ENCODE measurements at regions of chr4 and their contacts with region 1.

Region 1: DNA sequence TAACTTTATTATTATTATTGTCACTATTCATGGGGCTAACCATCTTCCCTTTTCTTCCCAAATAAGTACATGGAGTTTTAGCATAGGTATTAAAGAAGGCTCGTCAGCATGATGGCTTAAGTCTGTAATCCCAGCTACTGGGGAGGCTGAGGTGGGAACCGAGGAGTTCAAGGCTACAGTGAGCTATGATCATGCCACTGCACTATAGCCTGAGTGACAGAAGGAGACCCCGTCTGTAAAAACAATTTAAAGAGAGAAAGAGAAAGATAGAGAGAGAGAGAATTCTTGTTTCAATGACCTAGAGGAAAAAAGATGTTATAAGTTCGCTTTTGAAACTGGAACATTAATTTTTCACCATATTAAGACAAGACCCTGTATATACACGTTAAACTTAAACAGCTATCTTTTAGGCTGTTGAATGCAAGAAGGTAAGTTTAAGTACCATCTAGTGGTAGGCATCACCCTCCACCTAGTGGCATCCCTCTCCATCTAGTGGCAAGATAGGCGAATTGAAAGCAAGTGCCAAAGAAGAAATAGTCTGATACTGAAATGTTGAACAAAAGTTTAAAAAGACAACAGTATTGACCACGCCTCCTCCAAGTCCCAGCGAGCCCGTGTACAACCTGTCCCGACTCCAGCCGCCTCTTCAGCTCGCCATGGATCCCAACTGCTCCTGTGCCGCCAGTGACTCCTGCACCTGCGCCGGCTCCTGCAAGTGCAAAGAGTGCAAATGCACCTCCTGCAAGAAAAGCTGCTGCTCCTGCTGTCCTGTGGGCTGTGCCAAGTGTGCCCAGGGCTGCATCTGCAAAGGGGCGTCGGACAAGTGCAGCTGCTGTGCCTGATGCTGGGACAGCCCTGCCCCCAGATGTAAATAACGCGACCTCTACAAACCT is 26.0 kb upstream of the YTHDC1 start:
- DNase-seq: peak; percentile 39
- ATAC-seq: peak; percentile 69
- H3K4me3 Mint-ChIP-seq: peak overlapping the region; percentile 71
- H3K27ac Mint-ChIP-seq: peak overlapping the region; percentile 63
- H3K4me1 Mint-ChIP-seq: peaks cover 74% of the 10 kb centered on the region
- H3K27me3 Mint-ChIP-seq: peaks cover 7% of the 10 kb centered on the region
- CTCF ChIP-seq: peak; percentile 34; the same call in 1 of the 2 replicates

Region 2: GRCh38 chr4:68271851-68272756 is 103.8 kb before region 1 on chr4:
- CTCF ChIA-PET with region 1: interaction called, 28 read pairs
- POLR2A ChIA-PET with region 1: no interaction called
- DNase-seq: peak; percentile 32
- ATAC-seq: peak; percentile 82
- H3K4me3 Mint-ChIP-seq: peak overlapping the region; percentile 68
- H3K27ac Mint-ChIP-seq: peak overlapping the region; percentile 97
- H3K4me1 Mint-ChIP-seq: peaks cover 35% of the 10 kb centered on the region
- H3K27me3 Mint-ChIP-seq: 0 out of 2 replicates have a peak, but pooled peaks cover 6% of the 10 kb centered on the region
- CTCF ChIP-seq: peak; percentile 63

Region 3: GRCh38 chr4:68288393-68288740 is 87.5 kb before region 1 on chr4:
- CTCF ChIA-PET with region 1: interaction called, 10 read pairs
- POLR2A ChIA-PET with region 1: no interaction called
- DNase-seq: no peak
- ATAC-seq: peak; percentile 63; the same call in 1 of the 2 replicates
- H3K4me3 Mint-ChIP-seq: no peak overlapping the region
- H3K27ac Mint-ChIP-seq: no peak overlapping the region
- H3K4me1 Mint-ChIP-seq: peaks cover 21% of the 10 kb centered on the region
- H3K27me3 Mint-ChIP-seq: no peaks in the 10 kb centered on the region
- CTCF ChIP-seq: no peak

Region 4: GRCh38 chr4:68342134-68342533 is 33.8 kb before region 1 on chr4:
- CTCF ChIA-PET with region 1: interaction called, 15 read pairs
- POLR2A ChIA-PET with region 1: no interaction called
- DNase-seq: no peak
- ATAC-seq: peak; percentile 43
- H3K4me3 Mint-ChIP-seq: peak overlapping the region; percentile 8
- H3K27ac Mint-ChIP-seq: peak overlapping the region; percentile 8
- H3K4me1 Mint-ChIP-seq: peaks cover 62% of the 10 kb centered on the region
- H3K27me3 Mint-ChIP-seq: no peaks in the 10 kb centered on the region
- CTCF ChIP-seq: no peak

Region 5: GRCh38 chr4:68388347-68388865 is 12.5 kb after region 1 on chr4:
- CTCF ChIA-PET with region 1: interaction called, 10 read pairs
- POLR2A ChIA-PET with region 1: no interaction called
- DNase-seq: no peak
- ATAC-seq: no peak
- H3K4me3 Mint-ChIP-seq: no peak overlapping the region
- H3K27ac Mint-ChIP-seq: peak overlapping the region; percentile 93
- H3K4me1 Mint-ChIP-seq: peaks cover 55% of the 10 kb centered on the region
- H3K27me3 Mint-ChIP-seq: no peaks in the 10 kb centered on the region
- CTCF ChIP-seq: no peak

Region 6: GRCh38 chr4:68410149-68410548 is 34.2 kb after region 1 on chr4:
- CTCF ChIA-PET with region 1: interaction called, 10 read pairs
- POLR2A ChIA-PET with region 1: no interaction called
- DNase-seq: no peak
- ATAC-seq: no peak
- H3K4me3 Mint-ChIP-seq: peak overlapping the region; percentile 76; the same call in 1 of the 2 replicates
- H3K27ac Mint-ChIP-seq: peak overlapping the region; percentile 97
- H3K4me1 Mint-ChIP-seq: peaks cover 75% of the 10 kb centered on the region
- H3K27me3 Mint-ChIP-seq: no peaks in the 10 kb centered on the region; the same call in 1 of the 2 replicates
- CTCF ChIP-seq: no peak